AG04449 (cell line): ENCODE measurements at regions of chr17 and their contacts with region 1.

Region 1: GRCh38 chr17:61574542-61575174 is 16.4 kb downstream of the NACA2 start:
- DNase-seq: no peak
- H3K4me3 ChIP-seq: no peak overlapping the region
- CTCF ChIP-seq: peak; percentile 39

Region 2: GRCh38 chr17:61556224-61557188 is 18.2 kb before region 1 on chr17:
- CTCF ChIA-PET with region 1: interaction called, 12 read pairs
- POLR2A ChIA-PET with region 1: no interaction called
- DNase-seq: no peak
- H3K4me3 ChIP-seq: no peak overlapping the region
- CTCF ChIP-seq: no peak